HCT116 (cell line): ENCODE measurements at regions of chr21 and their contacts with region 1.

Region 1: DNA sequence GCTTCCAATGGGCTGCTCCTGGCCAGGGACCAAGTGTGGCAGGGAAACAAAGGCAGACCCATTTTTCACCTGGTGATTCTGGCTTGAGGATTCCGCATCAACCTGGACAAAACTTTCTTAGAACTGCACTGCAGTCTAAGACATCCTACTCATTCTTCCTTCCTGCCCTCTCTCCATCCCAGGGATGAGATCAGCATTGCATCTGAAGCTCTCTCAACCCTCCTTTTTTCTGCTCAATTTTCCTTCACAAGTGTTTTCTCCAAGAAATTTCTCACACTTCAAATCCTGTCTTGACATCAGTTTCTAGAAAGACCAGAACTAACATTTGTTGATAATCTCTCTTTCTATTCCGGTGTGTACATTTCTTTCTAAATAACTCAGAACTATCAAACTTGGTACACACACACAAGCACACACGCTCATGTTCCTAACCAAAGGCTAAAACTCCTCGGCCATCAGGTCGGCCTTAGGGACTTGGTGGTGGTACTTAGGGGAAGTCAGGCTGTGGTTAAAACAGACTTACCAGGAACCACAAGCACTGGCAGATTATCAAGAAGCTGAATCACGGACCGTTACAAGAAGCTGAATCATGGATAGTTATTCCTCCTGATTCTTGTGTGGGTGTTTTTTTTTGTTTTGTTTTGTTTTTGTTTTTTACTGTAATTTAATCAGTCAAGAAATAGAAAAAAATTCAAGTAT is 21.0 kb upstream of the CXADR start:
- DNase-seq: peak; percentile 26
- ATAC-seq: peak; percentile 70
- H3K4me3 ChIP-seq: no peak overlapping the region
- H3K27ac ChIP-seq: no peak overlapping the region
- H3K4me1 ChIP-seq: peaks cover 18 to 20% of the 10 kb centered on the region in 2 experiments
- H3K27me3 ChIP-seq: peaks cover 37% of the 10 kb centered on the region
- CTCF ChIP-seq: no peak
- POLR2A ChIP-seq: no peak
- RAD21 ChIP-seq: no peak

Region 2: DNA sequence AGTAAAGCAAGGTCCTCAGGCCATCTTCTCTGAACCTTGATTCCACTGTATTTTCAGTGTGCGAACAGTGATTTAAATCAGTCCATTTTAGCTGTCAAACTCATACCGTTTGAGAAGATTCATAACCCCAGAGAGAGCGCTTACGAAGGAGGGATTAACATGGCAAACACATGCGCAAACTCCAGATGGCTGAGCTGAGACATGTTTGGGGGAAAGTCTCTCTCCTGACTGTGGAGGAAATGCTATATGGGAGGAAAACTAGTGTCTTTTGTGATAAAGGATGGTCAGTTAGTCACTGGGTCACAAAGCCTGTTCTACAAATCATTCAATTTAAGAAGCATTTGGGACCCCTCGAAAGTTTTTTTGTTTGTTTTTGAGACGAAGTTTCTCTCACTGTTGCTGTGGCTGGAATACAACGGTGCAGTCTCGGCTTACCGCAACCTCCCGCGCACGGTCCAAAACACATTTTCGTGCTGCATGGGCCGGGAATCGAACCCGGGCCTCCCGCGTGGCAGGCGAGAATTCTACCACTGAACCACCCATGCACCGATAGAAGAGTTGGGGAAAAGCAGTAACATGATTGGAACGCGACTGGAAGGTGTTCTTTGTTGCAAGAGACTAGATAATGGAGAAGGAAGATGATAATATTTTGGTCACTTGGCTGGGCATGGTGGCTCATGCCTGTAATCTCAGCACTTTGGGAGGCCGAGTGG is 37.4 kb before region 1 on chr21:
- CTCF ChIA-PET with region 1: no interaction called
- POLR2A ChIA-PET with region 1: no interaction called
- RAD21 ChIA-PET with region 1: no interaction called
- intact Hi-C with region 1: loop called (anchors 5 kb)
- DNase-seq: peak; percentile 89
- ATAC-seq: peak; percentile 94
- H3K4me3 ChIP-seq: peak overlapping the region in 1 of 2 experiments; percentile 15; a peak in 1 of 4 replicates
- H3K27ac ChIP-seq: peak overlapping the region; percentile 58
- H3K4me1 ChIP-seq: peaks cover 10 to 15% of the 10 kb centered on the region in 2 experiments
- H3K27me3 ChIP-seq: no peaks in the 10 kb centered on the region
- CTCF ChIP-seq: no peak
- POLR2A ChIP-seq: no peak
- RAD21 ChIP-seq: no peak

Region 3: GRCh38 chr21:17650292-17650691 is 158.4 kb after region 1 on chr21:
- CTCF ChIA-PET with region 1: no interaction called
- POLR2A ChIA-PET with region 1: no interaction called
- RAD21 ChIA-PET with region 1: no interaction called
- intact Hi-C with region 1: no loop called
- DNase-seq: no peak
- ATAC-seq: no peak
- H3K4me3 ChIP-seq: no peak overlapping the region
- H3K27ac ChIP-seq: no peak overlapping the region
- H3K4me1 ChIP-seq: no peaks in the 10 kb centered on the region
- H3K27me3 ChIP-seq: peaks cover 6% of the 10 kb centered on the region; the same call in 1 of the 2 replicates
- CTCF ChIP-seq: no peak
- POLR2A ChIP-seq: no peak
- RAD21 ChIP-seq: no peak